Tibial artery (tissue), 4 donors: ENCODE measurements at regions of chr20 and their contacts with region 1.

Region 1: GRCh38 chr20:22691369-22692118 is 107.2 kb upstream of the FOXA2 start:
- DNase-seq: peak; percentile 75 to 88
- H3K4me3 ChIP-seq: peak overlapping the region; percentile 5 to 6
- H3K27ac ChIP-seq: peak overlapping the region in 1 of 2 donors; percentile 51
- H3K4me1 ChIP-seq: peaks cover 0 to 22% (median 12%) of the 10 kb centered on the region in 4 donors
- H3K27me3 ChIP-seq: no peaks in the 10 kb centered on the region
- CTCF ChIP-seq: peak; percentile 93 to 97

Region 2: DNA sequence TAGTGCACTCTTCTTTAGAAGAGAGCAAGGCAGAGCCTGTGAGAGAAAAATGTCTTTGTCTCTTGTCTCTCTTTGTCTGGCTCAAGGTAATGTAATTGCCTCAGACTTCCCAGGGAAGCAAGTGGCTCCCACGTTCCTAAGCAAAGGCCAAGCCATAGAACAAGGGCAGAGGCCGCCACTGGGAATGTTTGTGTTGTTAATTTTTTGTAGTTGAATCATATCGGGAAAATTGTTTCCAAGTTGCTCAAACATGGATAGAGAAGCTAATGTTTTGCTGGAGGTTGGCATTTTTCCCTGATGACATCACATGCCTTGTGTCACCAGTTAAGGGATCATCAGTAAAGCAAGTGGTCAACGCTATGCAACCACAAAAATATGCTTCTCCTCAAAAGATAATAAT is 104.3 kb after region 1 on chr20:
- intact Hi-C with region 1: loop called (anchors 10 kb)
- DNase-seq: peak; percentile 80
- H3K4me3 ChIP-seq: no peak overlapping the region
- H3K27ac ChIP-seq: peak overlapping the region; percentile 74 to 75
- H3K4me1 ChIP-seq: peaks cover 6 to 51% (median 24%) of the 10 kb centered on the region in 4 donors
- H3K27me3 ChIP-seq: no peaks in the 10 kb centered on the region
- CTCF ChIP-seq: no peak

Region 3: DNA sequence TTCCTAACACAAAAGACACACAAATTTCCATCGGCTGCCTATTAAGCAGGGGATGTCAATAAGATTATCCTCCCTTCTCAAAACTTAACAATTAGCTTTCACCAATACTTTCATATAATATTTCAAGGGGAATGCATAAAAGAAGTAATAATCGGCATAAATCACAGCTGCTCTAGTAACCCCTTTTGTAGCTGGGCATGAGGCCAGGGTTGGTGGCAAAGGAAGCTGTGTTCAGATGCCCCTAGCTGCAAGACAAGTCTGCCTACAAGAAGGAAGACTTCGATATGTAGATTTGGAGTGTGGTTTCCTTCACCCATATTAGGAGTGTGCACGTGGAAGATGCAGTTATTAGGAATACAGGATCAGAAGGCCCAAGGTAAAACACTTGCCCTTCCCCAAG is 186.6 kb after region 1 on chr20:
- intact Hi-C with region 1: no loop called
- DNase-seq: no peak
- H3K4me3 ChIP-seq: no peak overlapping the region
- H3K27ac ChIP-seq: no peak overlapping the region
- H3K4me1 ChIP-seq: no peaks in the 10 kb centered on the region
- H3K27me3 ChIP-seq: no peaks in the 10 kb centered on the region
- CTCF ChIP-seq: no peak

Region 4: DNA sequence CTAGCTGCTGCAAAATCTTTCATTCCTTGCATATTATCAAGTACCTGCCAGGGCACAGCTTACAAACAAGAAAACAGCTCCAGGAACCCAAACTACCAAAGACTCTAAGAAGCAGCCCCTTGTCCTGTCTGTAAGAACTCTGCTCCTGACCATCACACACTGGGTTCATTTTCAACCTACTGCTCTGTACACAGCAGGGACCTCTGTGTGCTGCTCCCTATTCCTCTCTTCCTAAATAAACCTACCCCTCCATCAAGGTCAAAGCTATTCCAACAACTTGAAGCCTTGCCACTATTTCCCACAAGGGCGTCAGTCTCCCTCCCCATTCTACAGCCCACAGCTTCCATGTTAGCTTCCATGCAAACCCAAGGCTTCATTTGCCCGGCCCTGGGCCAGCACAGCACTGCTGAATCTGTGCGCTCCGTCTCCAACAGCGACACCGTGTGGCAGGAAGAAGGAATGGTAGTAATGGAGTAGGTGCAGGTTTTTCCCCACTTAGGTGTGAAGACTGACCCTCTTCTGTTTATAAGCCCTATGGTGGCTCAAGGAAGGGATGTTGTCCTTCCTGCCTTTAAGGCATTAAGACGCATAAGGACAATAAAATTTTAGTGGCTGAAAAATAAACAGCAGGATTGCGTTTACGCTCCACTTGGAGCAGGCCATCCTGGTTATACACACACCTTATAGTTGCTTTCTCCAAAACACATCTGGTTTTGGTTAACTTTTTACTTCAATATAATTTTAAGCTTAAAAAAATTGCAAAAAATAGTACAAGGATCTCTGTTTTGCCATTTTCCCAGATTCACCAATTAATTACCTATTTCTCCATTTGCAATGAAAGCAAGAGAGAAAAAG is 543.9 kb after region 1 on chr20:
- intact Hi-C with region 1: loop called (anchors 5 kb)
- DNase-seq: peak; percentile 73 to 81
- H3K4me3 ChIP-seq: no peak overlapping the region
- H3K27ac ChIP-seq: no peak overlapping the region
- H3K4me1 ChIP-seq: peaks cover 0 to 5% (median 0%) of the 10 kb centered on the region in 4 donors
- H3K27me3 ChIP-seq: no peaks in the 10 kb centered on the region
- CTCF ChIP-seq: peak; percentile 66 to 78

Region 5: DNA sequence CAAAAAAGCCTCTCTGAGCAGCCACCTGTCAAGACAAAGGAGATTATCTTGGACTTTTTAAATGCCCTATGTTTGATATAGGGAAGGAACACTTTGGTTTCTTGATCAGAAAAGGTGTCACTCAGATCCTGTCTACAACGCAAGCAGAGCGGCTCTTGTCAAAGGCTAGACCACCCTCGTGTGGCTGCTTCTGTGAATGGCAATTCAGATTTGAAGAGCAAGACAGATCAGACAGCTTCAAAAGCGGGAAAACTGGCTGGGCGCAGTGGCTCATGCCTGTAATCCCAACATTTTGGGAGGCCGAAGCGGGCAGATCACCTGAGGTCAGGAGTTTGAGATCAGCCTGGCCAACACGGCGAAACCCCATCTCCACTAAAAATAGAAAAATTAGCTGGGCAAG is 649.0 kb after region 1 on chr20:
- intact Hi-C with region 1: loop called (anchors 2 kb)
- DNase-seq: peak; percentile 75 to 78
- H3K4me3 ChIP-seq: no peak overlapping the region
- H3K27ac ChIP-seq: no peak overlapping the region
- H3K4me1 ChIP-seq: no peaks in the 10 kb centered on the region
- H3K27me3 ChIP-seq: no peaks in the 10 kb centered on the region
- CTCF ChIP-seq: peak; percentile 64 to 75